ENCODE measurements at regions of chr5 and their contacts with region 1.

Region 1: DNA sequence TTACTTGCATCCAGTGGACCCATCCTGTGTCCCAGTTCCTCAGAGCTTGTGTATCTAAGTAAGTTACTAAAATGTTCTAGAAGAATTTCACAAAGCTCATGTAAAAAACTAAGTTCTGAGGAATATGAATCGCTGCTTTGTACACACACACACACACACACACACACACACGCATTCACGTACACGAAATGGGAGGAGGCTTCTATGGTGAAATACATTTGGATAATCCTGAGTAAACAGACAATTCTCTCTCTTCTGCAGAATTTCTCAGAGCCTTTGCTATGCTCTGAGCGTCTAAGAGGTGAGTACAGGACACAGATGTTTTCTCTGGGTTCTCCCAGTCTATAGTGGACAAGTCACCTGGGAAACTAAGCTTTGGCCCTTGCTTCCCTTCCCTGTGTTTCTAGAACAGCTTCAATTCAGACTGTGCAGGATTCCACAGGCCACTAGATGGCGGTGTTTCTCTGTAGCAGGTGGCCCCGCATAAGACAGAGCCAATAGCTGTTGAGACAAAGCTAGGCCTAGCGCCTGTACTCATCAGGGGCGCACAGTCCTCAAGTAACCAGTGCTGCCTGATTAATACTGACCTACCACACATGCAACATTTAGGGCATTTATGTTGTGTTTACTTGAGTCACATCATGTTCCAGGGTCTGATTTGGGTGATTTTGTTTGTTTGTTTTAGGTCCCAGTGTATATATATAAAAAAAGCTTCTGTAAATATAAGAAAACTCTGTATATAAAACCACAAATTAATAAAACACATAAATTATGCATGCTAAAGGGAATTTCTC is 114.8 kb downstream of the LIFR start:
- DNase-seq: peak; percentile 70 to 89
- H3K4me3 ChIP-seq: no peak overlapping the region
- H3K27ac ChIP-seq: no peak overlapping the region
- H3K4me1 ChIP-seq: no peaks in the 10 kb centered on the region
- H3K27me3 ChIP-seq: no peaks in the 10 kb centered on the region
- CTCF ChIP-seq: peak; percentile 73 to 98 (median 97)
- EP300 ChIP-seq: no peak
- POLR2A ChIP-seq: no peak
- RAD21 ChIP-seq: peak; percentile 99 to 100

Region 2: DNA sequence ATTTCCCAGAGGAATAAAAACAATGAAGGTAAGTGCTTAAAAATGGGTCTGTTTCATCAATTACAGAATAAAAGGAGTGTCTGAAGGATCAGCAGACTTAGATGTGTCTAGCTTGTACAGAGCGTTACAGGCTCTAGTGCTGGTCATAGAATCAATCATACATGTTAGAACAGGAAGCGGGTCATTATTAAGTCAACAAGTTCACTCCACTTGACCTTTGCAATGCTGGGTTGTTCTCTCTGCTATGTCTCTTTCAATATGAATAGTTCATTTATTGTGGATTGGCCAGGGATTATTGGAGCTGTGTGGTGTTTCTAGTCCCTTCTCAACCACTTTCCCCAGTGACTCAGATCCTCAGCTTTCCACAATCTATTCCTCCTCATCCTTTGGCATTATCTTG is 204.0 kb before region 1 on chr5:
- CTCF ChIA-PET with region 1: no interaction called
- POLR2A ChIA-PET with region 1: no interaction called
- DNase-seq: no peak
- H3K4me3 ChIP-seq: no peak overlapping the region
- H3K27ac ChIP-seq: no peak overlapping the region
- H3K4me1 ChIP-seq: no peaks in the 10 kb centered on the region
- H3K27me3 ChIP-seq: no peaks in the 10 kb centered on the region
- CTCF ChIP-seq: no peak
- EP300 ChIP-seq: no peak
- POLR2A ChIP-seq: no peak
- RAD21 ChIP-seq: no peak

Region 3: DNA sequence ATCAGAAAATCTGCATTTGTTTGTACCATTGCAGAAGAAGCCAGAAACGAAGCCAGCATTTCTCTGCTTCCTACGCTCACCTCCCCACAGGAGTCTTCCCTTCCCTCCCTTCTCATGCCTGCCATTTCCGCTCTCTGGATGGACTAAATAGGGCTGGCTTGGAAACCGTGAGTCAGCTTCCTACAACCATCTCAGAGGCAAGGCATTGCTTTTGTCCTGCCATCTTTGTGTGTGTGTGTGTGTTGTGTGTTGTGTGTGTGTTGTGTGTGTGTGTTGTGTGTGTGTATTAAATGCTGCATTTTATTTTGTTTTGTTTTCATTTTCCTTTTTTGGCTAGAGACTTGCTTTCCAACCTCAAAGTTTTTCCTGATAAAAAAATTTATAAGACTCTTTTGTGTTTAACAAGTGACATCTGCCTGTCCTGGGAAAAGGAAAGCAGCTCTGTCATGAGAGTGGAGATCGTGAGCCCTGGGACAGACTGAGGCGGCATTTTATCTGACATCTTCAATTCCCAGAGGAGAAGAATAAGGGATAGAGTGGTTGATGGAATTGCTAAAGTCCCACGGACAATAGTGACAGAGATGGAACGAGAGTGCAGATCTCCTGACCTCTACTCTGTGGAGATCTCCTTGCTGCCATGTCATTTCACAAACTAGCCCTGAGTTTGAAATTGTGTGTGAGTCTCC is 190.7 kb before region 1 on chr5:
- CTCF ChIA-PET with region 1: no interaction called
- POLR2A ChIA-PET with region 1: no interaction called
- DNase-seq: no peak
- H3K4me3 ChIP-seq: no peak overlapping the region
- H3K27ac ChIP-seq: no peak overlapping the region
- H3K4me1 ChIP-seq: no peaks in the 10 kb centered on the region
- H3K27me3 ChIP-seq: peaks cover 3 to 8% (median 6%) of the 10 kb centered on the region in 4 experiments
- CTCF ChIP-seq: no peak
- EP300 ChIP-seq: no peak
- POLR2A ChIP-seq: no peak
- RAD21 ChIP-seq: no peak

Region 4: GRCh38 chr5:38483788-38484398 is 42.2 kb after region 1 on chr5:
- CTCF ChIA-PET with region 1: interaction called, 11 read pairs
- POLR2A ChIA-PET with region 1: no interaction called
- DNase-seq: no peak
- H3K4me3 ChIP-seq: no peak overlapping the region
- H3K27ac ChIP-seq: no peak overlapping the region
- H3K4me1 ChIP-seq: no peaks in the 10 kb centered on the region
- H3K27me3 ChIP-seq: no peaks in the 10 kb centered on the region
- CTCF ChIP-seq: peak in 2 of 3 experiments; percentile 8 to 10; a peak in 1 of 4 replicates
- EP300 ChIP-seq: no peak
- POLR2A ChIP-seq: no peak
- RAD21 ChIP-seq: no peak

Region 5: GRCh38 chr5:38551030-38552017 is 109.7 kb after region 1 on chr5:
- CTCF ChIA-PET with region 1: interaction called, 14 read pairs
- POLR2A ChIA-PET with region 1: no interaction called
- DNase-seq: no peak
- H3K4me3 ChIP-seq: no peak overlapping the region
- H3K27ac ChIP-seq: no peak overlapping the region
- H3K4me1 ChIP-seq: peaks cover 0 to 5% (median 0%) of the 10 kb centered on the region in 4 experiments; a peak in 2 of 7 replicates
- H3K27me3 ChIP-seq: no peaks in the 10 kb centered on the region
- CTCF ChIP-seq: peak in 2 of 3 experiments; percentile 67; a peak in 3 of 4 replicates
- EP300 ChIP-seq: no peak
- POLR2A ChIP-seq: no peak
- RAD21 ChIP-seq: peak; percentile 69 to 70

Region 6: DNA sequence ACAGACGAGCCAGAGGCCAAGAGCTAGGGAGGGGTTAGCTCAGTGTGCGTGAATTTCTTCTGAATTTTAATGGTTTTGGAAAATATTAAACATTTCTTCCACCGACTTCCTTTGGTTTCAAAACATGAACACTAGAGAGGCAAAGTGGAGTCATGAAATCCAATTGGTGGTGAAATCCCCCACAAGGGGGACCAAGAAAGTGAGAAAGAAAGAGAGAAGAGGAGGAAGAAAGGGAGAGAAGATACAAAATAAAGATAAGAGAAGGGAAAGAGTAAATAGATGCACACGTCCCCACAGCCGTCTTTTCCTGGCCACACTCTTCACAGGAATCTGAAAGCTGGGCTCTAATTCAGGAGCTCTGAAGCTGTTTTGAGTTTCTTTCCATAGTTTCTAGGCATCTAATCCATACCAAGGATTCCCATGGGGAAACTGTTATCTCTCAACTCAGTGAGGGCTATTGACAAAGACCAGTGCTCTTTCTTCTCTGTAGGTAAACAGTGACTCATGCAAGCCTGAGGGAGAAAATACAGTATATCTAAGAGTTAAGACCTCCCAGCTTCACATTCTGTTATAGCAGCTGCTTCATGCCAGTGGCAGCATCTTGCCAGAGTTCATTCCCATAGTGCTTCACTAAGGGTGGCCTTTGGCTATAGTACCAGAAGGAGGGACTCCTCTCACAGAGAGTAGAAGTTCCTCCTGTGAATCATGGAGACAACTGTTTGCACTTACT is 230.6 kb after region 1 on chr5:
- CTCF ChIA-PET with region 1: interaction called, 19 read pairs
- POLR2A ChIA-PET with region 1: no interaction called
- DNase-seq: no peak
- H3K4me3 ChIP-seq: no peak overlapping the region
- H3K27ac ChIP-seq: no peak overlapping the region
- H3K4me1 ChIP-seq: no peaks in the 10 kb centered on the region
- H3K27me3 ChIP-seq: no peaks in the 10 kb centered on the region
- CTCF ChIP-seq: no peak
- EP300 ChIP-seq: no peak
- POLR2A ChIP-seq: no peak
- RAD21 ChIP-seq: no peak

Region 7: DNA sequence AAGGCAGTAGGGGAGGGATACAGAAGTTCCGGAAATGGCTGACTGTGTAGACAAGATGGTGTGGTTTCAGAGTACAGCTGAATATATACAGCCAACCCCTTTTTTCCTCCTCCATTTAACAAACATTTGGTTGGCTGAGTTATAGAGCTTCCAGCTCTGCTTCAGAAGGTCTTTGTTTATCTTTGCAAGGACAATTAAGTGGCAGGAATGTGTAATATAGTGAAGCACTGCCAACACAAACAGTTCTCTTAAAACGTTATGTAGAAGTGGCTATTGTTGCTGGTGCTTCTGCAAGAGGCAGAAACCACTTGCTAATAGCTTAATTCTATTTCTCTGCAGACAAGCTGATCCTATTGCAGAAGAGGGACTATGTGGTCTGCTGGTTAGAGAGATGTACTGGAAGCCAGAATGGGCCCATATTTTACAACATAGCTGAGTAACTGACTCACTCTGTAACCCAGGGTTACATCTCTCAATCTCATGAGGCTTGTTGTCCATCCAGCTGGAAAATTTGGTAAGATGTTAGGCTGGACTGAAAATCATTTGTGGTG is 341.4 kb after region 1 on chr5:
- CTCF ChIA-PET with region 1: interaction called, 10 read pairs
- POLR2A ChIA-PET with region 1: interaction called, 3 read pairs
- DNase-seq: no peak
- H3K4me3 ChIP-seq: no peak overlapping the region
- H3K27ac ChIP-seq: no peak overlapping the region
- H3K4me1 ChIP-seq: no peaks in the 10 kb centered on the region
- H3K27me3 ChIP-seq: no peaks in the 10 kb centered on the region
- CTCF ChIP-seq: no peak
- EP300 ChIP-seq: no peak
- POLR2A ChIP-seq: no peak
- RAD21 ChIP-seq: no peak

Measured in H1 (cell line).